B cell (primary cell): ENCODE measurements at regions of chr6 and their contacts with region 1.

Region 1: GRCh38 chr6:63764318-63764916 is 128.8 kb downstream of the PHF3 start:
- DNase-seq: peak; percentile 67
- ATAC-seq: no peak
- H3K4me3 ChIP-seq: no peak overlapping the region
- H3K4me3 Mint-ChIP-seq: no peak overlapping the region
- H3K27ac ChIP-seq: no peak overlapping the region
- H3K27ac Mint-ChIP-seq: no peak overlapping the region
- H3K4me1 ChIP-seq: no peaks in the 10 kb centered on the region
- H3K4me1 Mint-ChIP-seq: no peaks in the 10 kb centered on the region
- H3K27me3 ChIP-seq: peaks cover 0 to 4% (median 0%) of the 10 kb centered on the region in 4 experiments
- H3K27me3 Mint-ChIP-seq: peaks cover 11% of the 10 kb centered on the region
- CTCF ChIP-seq: peak; percentile 83

Region 2: DNA sequence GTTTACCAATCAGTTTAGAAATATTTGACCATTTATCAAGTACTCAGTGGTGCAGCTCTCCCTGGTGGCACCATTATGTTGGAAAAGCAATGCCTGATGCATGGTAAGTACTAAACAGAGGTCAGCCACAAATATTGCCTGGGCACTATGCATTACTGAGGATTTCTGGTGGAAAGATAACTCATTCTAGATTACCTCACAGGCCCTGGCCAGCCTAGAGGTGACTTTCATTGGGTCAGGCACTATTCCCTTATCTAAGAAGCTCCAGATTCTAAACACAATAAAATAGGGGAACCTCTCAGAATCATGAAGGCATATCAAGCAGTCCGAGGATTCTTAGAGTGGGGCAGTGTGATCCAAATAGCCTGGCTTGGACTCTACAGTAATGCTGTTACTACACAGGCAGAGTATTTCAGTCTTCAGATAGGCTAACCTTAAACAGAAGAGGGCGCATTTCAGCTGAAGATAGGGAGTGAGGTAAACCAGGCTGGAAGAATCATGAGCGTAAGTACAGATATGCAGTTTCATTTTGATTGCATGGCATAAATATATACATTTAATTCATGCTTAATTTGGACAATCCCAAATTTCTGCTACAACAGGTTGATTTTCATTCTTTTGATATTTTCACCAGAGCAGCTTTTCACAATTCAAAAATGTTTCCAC is 456.7 kb before region 1 on chr6:
- CTCF ChIA-PET with region 1: interaction called, 18 read pairs
- POLR2A ChIA-PET with region 1: no interaction called
- intact Hi-C with region 1: no loop called
- DNase-seq: peak; percentile 38
- ATAC-seq: no peak
- H3K4me3 ChIP-seq: no peak overlapping the region
- H3K4me3 Mint-ChIP-seq: no peak overlapping the region
- H3K27ac ChIP-seq: no peak overlapping the region
- H3K27ac Mint-ChIP-seq: no peak overlapping the region
- H3K4me1 ChIP-seq: no peaks in the 10 kb centered on the region
- H3K4me1 Mint-ChIP-seq: no peaks in the 10 kb centered on the region
- H3K27me3 ChIP-seq: no peaks in the 10 kb centered on the region
- H3K27me3 Mint-ChIP-seq: peaks cover 3% of the 10 kb centered on the region
- CTCF ChIP-seq: peak; percentile 38

Region 3: DNA sequence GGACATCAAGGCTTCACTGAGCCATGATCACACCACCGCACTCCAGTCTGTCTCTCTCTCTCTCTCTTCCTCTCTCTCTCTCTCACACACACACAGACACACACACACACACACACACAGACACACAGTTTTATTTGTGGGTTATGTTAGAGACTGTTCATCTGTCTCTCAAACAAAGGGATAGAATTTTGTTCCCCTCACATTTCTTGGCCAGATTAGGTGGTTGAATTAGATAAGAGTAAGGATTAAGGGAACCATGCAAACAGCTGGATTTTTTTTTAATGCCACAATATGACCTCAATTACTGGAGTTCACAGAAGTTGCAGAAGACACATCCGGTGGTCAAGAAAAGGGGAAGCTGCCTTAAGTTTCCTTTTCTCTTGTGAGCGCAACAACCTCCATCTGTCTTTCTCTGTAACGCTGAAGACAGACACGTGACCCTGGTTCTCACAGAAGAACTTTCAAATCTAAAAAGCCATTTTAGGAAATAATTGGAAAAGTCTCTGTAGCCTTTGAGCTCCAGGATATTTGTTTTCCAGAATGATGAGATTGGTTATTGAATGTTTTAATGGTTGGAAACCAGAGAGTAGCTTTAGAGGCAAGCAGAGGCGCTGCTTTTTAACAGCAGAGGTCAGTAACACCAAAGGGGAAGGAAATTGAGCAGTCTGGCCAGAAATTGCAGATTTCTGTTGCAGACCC is 411.7 kb before region 1 on chr6:
- CTCF ChIA-PET with region 1: interaction called, 36 read pairs
- POLR2A ChIA-PET with region 1: no interaction called
- intact Hi-C with region 1: no loop called
- DNase-seq: peak; percentile 80
- ATAC-seq: peak; percentile 81
- H3K4me3 ChIP-seq: peak overlapping the region; percentile 5 to 45 (median 14)
- H3K4me3 Mint-ChIP-seq: peak overlapping the region; percentile 65
- H3K27ac ChIP-seq: peak overlapping the region; percentile 38 to 56
- H3K27ac Mint-ChIP-seq: peak overlapping the region; percentile 80
- H3K4me1 ChIP-seq: peaks cover 13 to 18% of the 10 kb centered on the region in 2 donors
- H3K4me1 Mint-ChIP-seq: peaks cover 18% of the 10 kb centered on the region
- H3K27me3 ChIP-seq: no peaks in the 10 kb centered on the region
- H3K27me3 Mint-ChIP-seq: no peaks in the 10 kb centered on the region
- CTCF ChIP-seq: no peak

Region 4: DNA sequence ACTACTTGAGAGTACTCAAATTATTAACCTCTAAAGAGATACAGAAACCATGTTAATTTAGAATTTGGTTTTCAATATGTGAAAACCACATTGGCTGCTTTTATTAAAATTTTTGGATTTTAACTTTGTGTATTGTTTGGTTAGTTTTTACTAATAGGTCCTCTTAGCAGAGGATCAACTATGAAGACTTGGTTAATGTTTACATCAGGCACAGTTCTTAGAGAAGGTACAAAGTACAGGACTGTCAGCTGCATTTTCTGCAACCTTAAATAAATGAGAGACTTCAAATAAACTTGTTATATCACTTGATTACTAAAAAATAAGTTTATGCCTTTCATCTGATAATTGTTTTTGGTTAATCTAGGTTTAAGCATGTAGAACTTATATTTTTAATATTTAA is 39.7 kb before region 1 on chr6:
- CTCF ChIA-PET with region 1: no interaction called
- POLR2A ChIA-PET with region 1: no interaction called
- intact Hi-C with region 1: no loop called
- DNase-seq: no peak
- ATAC-seq: no peak
- H3K4me3 ChIP-seq: no peak overlapping the region
- H3K4me3 Mint-ChIP-seq: no peak overlapping the region
- H3K27ac ChIP-seq: no peak overlapping the region
- H3K27ac Mint-ChIP-seq: no peak overlapping the region
- H3K4me1 ChIP-seq: no peaks in the 10 kb centered on the region
- H3K4me1 Mint-ChIP-seq: no peaks in the 10 kb centered on the region
- H3K27me3 ChIP-seq: no peaks in the 10 kb centered on the region
- H3K27me3 Mint-ChIP-seq: no peaks in the 10 kb centered on the region
- CTCF ChIP-seq: no peak

Region 5: GRCh38 chr6:63750400-63750799 is 14.0 kb before region 1 on chr6:
- CTCF ChIA-PET with region 1: interaction called, 14 read pairs
- POLR2A ChIA-PET with region 1: no interaction called
- intact Hi-C with region 1: no loop called
- DNase-seq: no peak
- ATAC-seq: no peak
- H3K4me3 ChIP-seq: no peak overlapping the region
- H3K4me3 Mint-ChIP-seq: no peak overlapping the region
- H3K27ac ChIP-seq: no peak overlapping the region
- H3K27ac Mint-ChIP-seq: no peak overlapping the region
- H3K4me1 ChIP-seq: no peaks in the 10 kb centered on the region
- H3K4me1 Mint-ChIP-seq: no peaks in the 10 kb centered on the region
- H3K27me3 ChIP-seq: no peaks in the 10 kb centered on the region
- H3K27me3 Mint-ChIP-seq: peaks cover 22% of the 10 kb centered on the region
- CTCF ChIP-seq: no peak

Region 6: DNA sequence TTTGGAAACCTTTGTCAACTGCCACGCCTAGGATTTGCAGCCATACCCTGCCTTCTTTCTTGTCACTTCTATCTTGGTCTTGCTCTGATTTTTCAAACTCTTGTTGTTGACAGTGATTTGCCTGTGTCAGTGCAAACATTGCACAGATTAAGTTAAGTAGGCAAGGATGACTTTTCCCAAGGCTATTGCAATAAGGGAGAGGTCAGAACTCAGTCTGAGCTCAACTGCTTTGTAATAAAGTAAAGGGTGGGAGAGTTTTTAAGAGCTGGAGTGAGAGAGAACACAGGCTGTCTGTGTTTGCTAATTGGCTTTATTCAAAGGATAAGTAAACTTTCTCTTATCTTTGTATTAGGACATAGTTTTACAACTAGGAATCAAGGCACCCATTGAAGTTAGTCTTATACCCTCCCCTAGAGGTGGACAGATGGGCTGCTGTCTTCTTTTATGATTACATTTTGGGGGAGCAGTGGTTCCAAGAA is 319.8 kb after region 1 on chr6:
- CTCF ChIA-PET with region 1: no interaction called
- POLR2A ChIA-PET with region 1: no interaction called
- intact Hi-C with region 1: no loop called
- DNase-seq: no peak
- ATAC-seq: no peak
- H3K4me3 ChIP-seq: no peak overlapping the region
- H3K4me3 Mint-ChIP-seq: no peak overlapping the region
- H3K27ac ChIP-seq: no peak overlapping the region
- H3K27ac Mint-ChIP-seq: no peak overlapping the region
- H3K4me1 ChIP-seq: no peaks in the 10 kb centered on the region
- H3K4me1 Mint-ChIP-seq: no peaks in the 10 kb centered on the region
- H3K27me3 ChIP-seq: no peaks in the 10 kb centered on the region
- H3K27me3 Mint-ChIP-seq: no peaks in the 10 kb centered on the region
- CTCF ChIP-seq: no peak